ENCODE measurements at regions of chr2 and their contacts with region 1.

Region 1: GRCh38 chr2:152335010-152335725 is at the start of gene FMNL2:
- DNase-seq: peak; percentile 89
- H3K4me3 Mint-ChIP-seq: peak within 1 kb of the TSS; percentile 99
- H3K27ac Mint-ChIP-seq: peak within 1 kb of the TSS; percentile 61
- H3K4me1 Mint-ChIP-seq: peaks cover 30% of the 10 kb centered on the region
- H3K27me3 Mint-ChIP-seq: no peaks in the 10 kb centered on the region
- CTCF ChIP-seq: no peak
- total RNA-seq, gene FMNL2: 42.9 and 46.5 TPM in 2 replicates

Region 2: GRCh38 chr2:152175458-152176325 is 159.5 kb before region 1 on chr2 and contains the start of gene STAM2:
- CTCF ChIA-PET with region 1: no interaction called
- intact Hi-C with region 1: loop called (anchors 5 kb)
- DNase-seq: peak; percentile 96
- H3K4me3 Mint-ChIP-seq: peak within 1 kb of the TSS; percentile 81
- H3K27ac Mint-ChIP-seq: peak within 1 kb of the TSS; percentile 96
- H3K4me1 Mint-ChIP-seq: peaks cover 19% of the 10 kb centered on the region
- H3K27me3 Mint-ChIP-seq: no peaks in the 10 kb centered on the region
- CTCF ChIP-seq: peak; percentile 93
- total RNA-seq, gene STAM2: 28.7 and 28.8 TPM in 2 replicates

Region 3: GRCh38 chr2:152189622-152190495 is 145.3 kb before region 1 on chr2:
- CTCF ChIA-PET with region 1: no interaction called
- intact Hi-C with region 1: loop called (anchors 5 kb)
- DNase-seq: peak; percentile 55
- H3K4me3 Mint-ChIP-seq: no peak overlapping the region
- H3K27ac Mint-ChIP-seq: no peak overlapping the region
- H3K4me1 Mint-ChIP-seq: peaks cover 9% of the 10 kb centered on the region
- H3K27me3 Mint-ChIP-seq: no peaks in the 10 kb centered on the region
- CTCF ChIP-seq: peak; percentile 41

Region 4: DNA sequence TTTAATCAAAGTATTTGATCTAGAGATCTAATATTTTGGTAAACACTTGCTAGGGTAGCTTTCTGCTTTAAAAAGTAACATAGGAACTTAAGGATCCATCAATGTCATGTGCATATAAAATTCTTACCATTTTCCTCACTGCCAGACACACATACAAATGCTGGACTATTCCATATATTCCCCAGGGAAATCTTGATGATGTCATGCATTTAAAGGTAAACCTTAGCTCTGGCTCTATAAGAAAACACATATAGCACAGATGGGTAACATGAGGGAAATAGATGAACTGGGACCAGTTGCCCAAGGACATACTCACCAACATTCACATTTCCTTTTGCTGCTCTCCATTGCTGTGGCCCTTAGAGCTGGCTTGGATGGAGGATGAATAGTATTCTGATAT is 79.2 kb before region 1 on chr2:
- CTCF ChIA-PET with region 1: interaction called, 10 read pairs
- intact Hi-C with region 1: no loop called
- DNase-seq: no peak
- H3K4me3 Mint-ChIP-seq: no peak overlapping the region
- H3K27ac Mint-ChIP-seq: no peak overlapping the region
- H3K4me1 Mint-ChIP-seq: no peaks in the 10 kb centered on the region
- H3K27me3 Mint-ChIP-seq: no peaks in the 10 kb centered on the region
- CTCF ChIP-seq: no peak

Region 5: GRCh38 chr2:152407204-152407721 is 72.1 kb after region 1 on chr2:
- CTCF ChIA-PET with region 1: no interaction called
- intact Hi-C with region 1: loop called (anchors 5 kb)
- DNase-seq: peak; percentile 50
- H3K4me3 Mint-ChIP-seq: peak overlapping the region; percentile 68
- H3K27ac Mint-ChIP-seq: peak overlapping the region; percentile 78
- H3K4me1 Mint-ChIP-seq: peaks cover 87% of the 10 kb centered on the region
- H3K27me3 Mint-ChIP-seq: no peaks in the 10 kb centered on the region
- CTCF ChIP-seq: no peak

Region 6: GRCh38 chr2:152466980-152467676 is 132.0 kb after region 1 on chr2:
- CTCF ChIA-PET with region 1: interaction called, 3 read pairs
- intact Hi-C with region 1: loop called (anchors 5 kb)
- DNase-seq: no peak
- H3K4me3 Mint-ChIP-seq: peak overlapping the region; percentile 58
- H3K27ac Mint-ChIP-seq: peak overlapping the region; percentile 70
- H3K4me1 Mint-ChIP-seq: peaks cover 81% of the 10 kb centered on the region
- H3K27me3 Mint-ChIP-seq: no peaks in the 10 kb centered on the region
- CTCF ChIP-seq: no peak

Region 7: GRCh38 chr2:152635635-152636298 is 300.6 kb after region 1 on chr2:
- CTCF ChIA-PET with region 1: no interaction called
- intact Hi-C with region 1: loop called (anchors 2 kb)
- DNase-seq: peak; percentile 76
- H3K4me3 Mint-ChIP-seq: no peak overlapping the region
- H3K27ac Mint-ChIP-seq: no peak overlapping the region
- H3K4me1 Mint-ChIP-seq: no peaks in the 10 kb centered on the region
- H3K27me3 Mint-ChIP-seq: no peaks in the 10 kb centered on the region
- CTCF ChIP-seq: peak; percentile 84

Measured in Calu3 (cell line).